Astrocyte of the cerebellum (primary cell): ENCODE measurements at regions of chr14 and their contacts with region 1.

Region 1: DNA sequence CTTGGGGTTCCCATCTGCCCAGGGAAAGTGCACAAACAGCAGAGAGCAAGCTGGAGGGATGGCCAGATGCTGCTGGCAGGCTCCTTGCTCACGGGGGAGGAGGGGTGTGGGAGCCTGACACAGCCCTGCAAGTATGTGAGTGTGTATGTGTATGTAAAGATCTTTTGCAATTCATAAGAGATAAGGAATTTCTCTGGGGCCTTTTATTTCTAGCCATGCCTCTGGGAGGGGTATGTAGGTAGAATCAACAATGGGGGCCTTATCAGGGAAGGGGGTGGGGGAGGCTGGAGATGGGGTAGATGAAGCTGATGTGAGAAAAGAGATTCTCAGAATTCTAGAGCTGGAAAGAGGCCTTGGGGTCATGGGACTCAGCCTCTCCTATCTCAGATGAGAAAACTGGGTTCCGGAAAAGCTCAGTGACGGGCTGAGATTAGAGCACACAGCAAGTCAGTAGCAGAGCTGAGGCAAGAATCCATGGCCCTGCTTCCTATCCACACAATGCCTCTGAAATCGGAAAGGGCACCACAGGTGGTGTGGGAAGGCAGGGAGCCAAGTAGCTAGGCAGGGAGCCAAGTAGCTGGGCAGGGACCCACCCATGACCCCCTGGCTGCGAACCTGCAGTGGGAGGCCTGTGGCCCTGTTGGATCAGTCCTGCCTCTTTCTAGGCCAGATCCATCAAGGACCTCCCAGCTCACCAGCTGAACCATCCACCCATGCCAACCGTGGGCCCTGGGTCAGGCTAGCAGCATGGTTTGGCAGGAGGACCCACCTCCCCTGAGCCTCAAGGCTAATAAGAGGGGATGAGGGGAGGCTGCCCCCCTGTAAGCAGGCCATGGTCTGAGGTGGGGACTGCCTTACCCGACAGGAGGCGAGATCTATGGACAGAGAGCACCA is 54.7 kb downstream of the PLEKHG3 start:
- DNase-seq: peak; percentile 65
- H3K4me3 ChIP-seq: no peak overlapping the region
- CTCF ChIP-seq: no peak

Region 2: GRCh38 chr14:64654246-64654900 is 104.6 kb before region 1 on chr14:
- in situ Hi-C with region 1: loop called (anchors 5 kb)
- DNase-seq: peak; percentile 47
- H3K4me3 ChIP-seq: no peak overlapping the region
- CTCF ChIP-seq: no peak

Region 3: DNA sequence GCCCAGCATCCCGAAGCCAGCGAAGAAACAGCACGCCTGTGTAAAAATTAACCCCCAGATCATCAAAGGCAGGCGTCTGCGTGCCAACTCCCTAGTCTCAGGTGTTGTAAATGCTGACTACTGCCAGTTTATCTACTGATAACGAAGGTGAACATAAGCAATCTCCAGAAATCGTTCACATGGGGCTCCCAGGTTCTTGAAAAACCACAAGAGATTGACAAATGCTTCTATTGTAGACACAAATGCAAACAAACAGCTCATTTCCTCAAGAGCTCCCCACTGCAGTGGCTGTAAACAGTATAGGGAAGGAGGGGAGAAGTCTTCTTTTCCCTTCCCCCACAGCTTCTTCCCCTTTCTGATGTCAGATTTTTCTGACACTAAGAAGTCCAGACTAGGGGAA is 60.0 kb before region 1 on chr14:
- in situ Hi-C with region 1: loop called (anchors 10 kb)
- DNase-seq: no peak
- H3K4me3 ChIP-seq: no peak overlapping the region
- CTCF ChIP-seq: no peak

Region 4: DNA sequence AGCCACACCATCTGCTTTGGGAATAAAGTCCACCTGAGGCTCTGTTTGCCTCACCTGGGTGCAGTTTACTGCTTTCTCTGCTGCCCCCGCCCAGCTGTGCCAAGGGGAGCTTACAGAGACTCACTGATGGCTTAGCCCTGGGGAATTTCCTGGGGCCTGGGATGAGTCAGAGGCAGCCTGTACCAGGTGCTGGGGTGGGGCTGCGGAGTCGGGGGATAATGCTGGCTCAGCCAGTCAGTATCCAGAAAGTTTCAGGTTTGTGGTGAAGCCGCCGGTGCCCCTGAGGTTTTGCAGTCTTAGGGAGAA is 32.4 kb before region 1 on chr14:
- in situ Hi-C with region 1: no loop called
- DNase-seq: no peak
- H3K4me3 ChIP-seq: no peak overlapping the region
- CTCF ChIP-seq: no peak

Region 5: GRCh38 chr14:64857979-64858744 is 99.2 kb after region 1 on chr14:
- in situ Hi-C with region 1: no loop called
- DNase-seq: no peak
- H3K4me3 ChIP-seq: no peak overlapping the region
- CTCF ChIP-seq: no peak